Activated CD4-positive, alpha-beta memory T cell treated with anti-CD3 and anti-CD28 coated beads, Interleukin-2, amount 10 ng/mL, durations not matched to agents 7 days and 5 days (primary cell): ENCODE measurements at regions of chr4 and their contacts with region 1.

Region 1: GRCh38 chr4:118363166-118363565 is 10.4 kb upstream of the PRSS12 start:
- DNase-seq: no peak
- H3K4me3 Mint-ChIP-seq: no peak overlapping the region
- H3K27ac Mint-ChIP-seq: no peak overlapping the region
- H3K4me1 Mint-ChIP-seq: no peaks in the 10 kb centered on the region
- H3K27me3 Mint-ChIP-seq: peaks cover 21% of the 10 kb centered on the region

Region 2: GRCh38 chr4:118352843-118353533 is 10.2 kb before region 1 on chr4 and contains the start of gene PRSS12:
- CTCF ChIA-PET with region 1: interaction called, 15 read pairs
- POLR2A ChIA-PET with region 1: interaction called, 3 read pairs
- DNase-seq: peak; percentile 63
- H3K4me3 Mint-ChIP-seq: peak within 1 kb of the TSS; percentile 59
- H3K27ac Mint-ChIP-seq: peak within 1 kb of the TSS; percentile 29
- H3K4me1 Mint-ChIP-seq: peaks cover 11% of the 10 kb centered on the region
- H3K27me3 Mint-ChIP-seq: peaks cover 66% of the 10 kb centered on the region
- total RNA-seq, gene PRSS12: not detected